GM13976 (cell line): ENCODE measurements at regions of chr7 and their contacts with region 1.

Region 1: DNA sequence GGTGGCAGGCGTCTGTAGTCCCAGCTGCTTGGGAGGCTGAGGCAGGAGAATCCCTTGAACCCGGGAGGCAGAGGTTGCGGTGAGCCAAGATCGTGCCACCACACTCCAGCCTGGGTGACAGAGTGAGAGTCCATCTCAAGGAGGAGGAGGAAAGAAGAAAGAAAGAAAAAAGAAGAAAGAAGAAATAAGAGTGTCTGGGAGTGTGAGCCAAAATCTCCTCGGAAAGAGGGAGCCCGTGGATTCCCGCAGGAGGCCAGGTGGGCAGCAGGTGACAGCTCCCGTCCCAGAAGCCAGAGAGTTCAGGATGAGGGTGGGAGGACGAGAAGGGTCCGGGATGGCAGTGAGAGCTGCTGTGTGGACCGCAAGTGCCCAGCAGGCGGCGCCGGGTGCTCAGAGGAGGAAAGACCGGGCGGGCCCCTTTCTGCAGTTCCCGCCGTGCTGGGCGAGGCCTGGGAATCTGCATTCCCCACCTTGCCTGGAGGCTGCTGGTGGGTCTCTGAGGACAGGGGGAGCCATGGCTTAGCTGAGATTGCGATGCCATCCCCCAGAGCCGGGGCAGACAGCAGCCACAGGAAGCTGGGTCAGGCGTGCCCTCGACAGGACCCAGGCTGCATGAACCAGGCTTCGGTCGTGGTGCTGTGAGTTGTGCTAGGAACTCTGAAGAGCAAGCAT is 17.1 kb upstream of the AMZ1 start:
- DNase-seq: peak; percentile 91
- CTCF ChIP-seq: peak; percentile 88

Region 2: DNA sequence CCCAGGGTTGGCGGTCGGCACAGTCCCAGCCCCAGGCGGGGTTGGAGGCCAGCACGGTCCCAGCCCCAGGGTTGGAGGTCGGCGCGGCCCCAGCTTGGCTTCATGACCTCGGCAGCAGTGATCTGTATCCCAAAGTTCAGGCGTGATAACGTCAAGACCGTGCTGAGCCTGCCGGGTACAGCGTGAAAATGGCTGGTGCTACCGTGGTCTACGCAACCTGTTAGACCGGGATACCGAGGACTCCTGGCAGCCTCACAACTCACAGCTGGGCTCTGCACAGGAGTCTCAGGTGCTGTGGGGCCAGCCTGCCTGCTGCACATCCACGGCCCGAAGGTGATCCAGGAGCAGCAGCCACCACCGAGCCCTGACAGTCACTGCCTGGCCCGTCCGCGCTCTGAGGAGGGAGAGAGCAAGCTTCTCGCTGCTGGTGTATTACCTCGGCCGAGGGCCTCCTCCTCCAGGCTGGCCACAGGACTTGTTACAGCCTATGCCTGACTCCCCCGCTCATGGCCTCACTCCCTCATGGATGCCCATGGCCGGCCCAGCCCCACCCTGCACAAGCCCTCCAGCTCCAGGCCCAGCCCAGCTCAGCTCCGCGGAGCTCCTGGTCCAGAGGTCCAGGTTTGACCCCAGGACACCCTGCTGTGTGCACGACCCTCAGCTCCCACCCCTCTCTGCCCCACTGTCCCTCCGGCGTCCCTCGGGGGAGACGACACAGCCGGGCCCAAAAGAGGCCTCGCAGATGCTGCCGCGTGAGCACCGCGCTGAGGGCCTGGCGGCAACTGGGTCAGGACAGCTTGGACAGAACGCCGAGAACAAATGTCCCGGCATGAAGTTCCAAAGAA is 844.7 kb before region 1 on chr7:
- in situ Hi-C with region 1: no loop called
- DNase-seq: no peak
- CTCF ChIP-seq: no peak

Region 3: DNA sequence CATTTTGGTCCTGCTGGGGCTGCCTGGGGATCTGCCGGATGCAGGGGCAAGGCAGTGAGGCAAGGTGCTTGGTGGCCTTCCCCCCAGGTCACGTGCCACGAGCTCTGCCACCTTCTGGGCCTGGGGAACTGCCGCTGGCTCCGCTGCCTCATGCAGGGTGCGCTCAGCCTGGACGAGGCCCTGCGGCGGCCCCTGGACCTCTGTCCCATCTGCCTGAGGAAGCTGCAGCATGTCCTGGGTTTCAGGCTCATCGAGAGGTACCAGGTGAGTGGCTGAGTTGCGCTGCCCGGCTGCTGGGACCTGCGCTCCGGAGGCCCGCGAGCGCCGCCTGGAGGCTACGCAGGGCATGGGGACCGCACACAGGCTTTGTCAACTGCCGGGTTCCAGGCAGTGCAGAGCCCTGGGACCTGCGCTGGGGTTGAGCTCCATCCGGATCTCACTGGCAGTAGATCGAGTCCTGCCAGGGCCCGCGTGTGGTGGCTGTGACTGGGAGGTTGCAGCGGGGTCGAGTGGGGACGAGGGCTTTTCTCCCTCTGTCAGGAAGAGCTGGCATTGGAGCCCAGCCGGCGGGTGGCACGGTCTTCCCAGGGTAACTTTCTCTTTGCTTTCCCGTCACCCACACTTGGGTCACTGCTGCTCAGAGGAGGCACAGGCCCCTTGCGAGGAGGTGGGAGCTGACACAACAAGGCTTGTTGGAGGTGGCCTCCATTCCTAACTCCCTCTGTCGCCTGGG is 38.9 kb after region 1 on chr7:
- in situ Hi-C with region 1: loop called (anchors 5 kb)
- DNase-seq: peak; percentile 91
- CTCF ChIP-seq: peak; percentile 99